ENCODE measurements at regions of chr7 and their contacts with region 1.

Region 1: GRCh38 chr7:98400542-98401340 is at the start of gene BAIAP2L1:
- DNase-seq: peak; percentile 86 to 100
- H3K4me3 ChIP-seq: peak within 1 kb of the TSS; percentile 75 to 84 (median 79)
- H3K27ac ChIP-seq: peak within 1 kb of the TSS; percentile 89
- H3K4me1 ChIP-seq: peaks cover 1 to 9% (median 6%) of the 10 kb centered on the region in 4 experiments; a peak in 6 of 7 replicates
- H3K27me3 ChIP-seq: no peaks in the 10 kb centered on the region
- CTCF ChIP-seq: peak in 2 of 3 experiments; percentile 84 to 90
- EP300 ChIP-seq: no peak
- POLR2A ChIP-seq: peak; percentile 52 to 83
- RAD21 ChIP-seq: peak; percentile 65 to 75; a peak in 2 of 4 replicates
- total RNA-seq, gene BAIAP2L1: 42.0 and 42.9 TPM in 2 replicates

Region 2: DNA sequence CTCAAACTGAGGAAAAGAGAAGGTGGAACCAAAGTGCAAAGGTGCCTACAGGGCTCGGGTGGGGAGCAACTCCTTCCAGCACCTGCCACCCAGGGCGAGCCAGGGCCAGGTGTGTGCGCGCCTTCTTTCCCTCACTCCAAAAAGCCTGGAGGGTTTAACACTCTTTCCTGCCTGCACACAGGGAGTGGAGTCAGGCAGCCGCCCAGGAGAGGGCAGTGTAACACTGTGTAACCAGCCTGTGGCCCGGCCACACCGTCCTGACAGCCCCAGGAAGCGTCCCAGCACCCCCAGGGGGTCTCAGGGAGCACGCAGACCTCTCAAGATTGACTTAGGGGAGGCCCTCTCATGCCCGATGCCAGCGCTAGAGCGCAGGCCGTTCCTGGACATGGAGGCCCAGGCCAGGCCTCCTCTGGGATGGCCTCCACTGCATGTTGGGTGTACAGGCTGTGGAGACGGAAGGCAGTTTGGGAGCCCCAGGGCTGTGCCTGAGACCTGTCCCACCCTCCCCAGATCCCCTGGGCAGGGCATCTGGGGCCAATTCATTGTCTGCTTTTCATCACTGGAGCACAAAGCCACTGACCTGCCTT is 105.9 kb before region 1 on chr7:
- CTCF ChIA-PET with region 1: interaction called, 57 read pairs
- POLR2A ChIA-PET with region 1: interaction called, 7 read pairs
- DNase-seq: peak; percentile 70 to 91
- H3K4me3 ChIP-seq: no peak overlapping the region
- H3K27ac ChIP-seq: no peak overlapping the region
- H3K4me1 ChIP-seq: peaks cover 0 to 10% (median 3%) of the 10 kb centered on the region in 4 experiments; a peak in 5 of 7 replicates
- H3K27me3 ChIP-seq: no peaks in the 10 kb centered on the region
- CTCF ChIP-seq: peak; percentile 85 to 91 (median 91)
- EP300 ChIP-seq: no peak
- POLR2A ChIP-seq: 0 out of 3 replicates have a peak, but pooled peaks of 1 of the 2 experiments have one; percentile 34
- RAD21 ChIP-seq: peak; percentile 92 to 95

Region 3: DNA sequence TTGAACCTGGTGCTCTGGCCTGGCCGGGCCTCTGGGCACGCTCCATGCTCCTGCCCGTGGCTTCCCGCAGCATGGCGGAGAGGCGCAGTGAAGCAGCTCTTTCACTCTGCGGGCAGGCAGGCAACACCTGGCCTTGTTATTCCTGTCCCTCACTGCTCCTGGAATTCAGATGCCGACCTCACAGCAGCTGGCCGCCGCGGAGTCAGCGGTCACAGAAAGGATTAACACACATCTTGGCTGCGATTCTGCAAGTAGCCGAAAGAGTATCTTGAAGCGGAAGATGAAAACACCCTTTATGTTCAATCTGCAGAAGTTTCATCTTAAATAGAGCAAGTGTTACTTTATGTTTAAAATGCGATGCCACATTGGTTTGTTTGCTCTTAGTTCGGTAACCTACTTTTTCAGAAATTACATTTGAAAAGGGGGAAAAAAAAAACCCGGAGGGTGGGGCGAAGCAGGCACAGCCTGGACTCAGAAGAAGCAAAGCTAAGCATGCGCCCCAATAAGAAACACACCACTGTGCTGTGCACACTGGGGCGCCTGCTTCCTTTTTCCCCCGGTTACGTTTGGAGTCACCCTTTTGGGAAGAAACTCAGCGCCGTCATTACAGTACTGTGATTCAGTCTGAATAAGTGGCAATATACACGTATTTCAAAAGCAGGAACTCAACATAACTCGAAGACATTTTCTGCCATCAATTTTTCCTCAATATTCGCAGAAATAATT is 77.0 kb before region 1 on chr7:
- CTCF ChIA-PET with region 1: interaction called, 48 read pairs
- POLR2A ChIA-PET with region 1: interaction called, 16 read pairs
- DNase-seq: peak; percentile 33 to 71
- H3K4me3 ChIP-seq: peak overlapping the region in 2 of 4 experiments; percentile 9 to 49; a peak in 3 of 8 replicates
- H3K27ac ChIP-seq: peak overlapping the region; percentile 57; the same call in 1 of the 2 replicates
- H3K4me1 ChIP-seq: peaks cover 4 to 17% (median 10%) of the 10 kb centered on the region in 4 experiments
- H3K27me3 ChIP-seq: no peaks in the 10 kb centered on the region
- CTCF ChIP-seq: no peak; a peak in 1 of 4 replicates
- EP300 ChIP-seq: peak in 1 of 2 experiments; percentile 71; a peak in 1 of 3 replicates
- POLR2A ChIP-seq: peak in 1 of 2 experiments; percentile 67; a peak in 2 of 3 replicates
- RAD21 ChIP-seq: peak; percentile 18 to 21; a peak in 1 of 4 replicates

Region 4: DNA sequence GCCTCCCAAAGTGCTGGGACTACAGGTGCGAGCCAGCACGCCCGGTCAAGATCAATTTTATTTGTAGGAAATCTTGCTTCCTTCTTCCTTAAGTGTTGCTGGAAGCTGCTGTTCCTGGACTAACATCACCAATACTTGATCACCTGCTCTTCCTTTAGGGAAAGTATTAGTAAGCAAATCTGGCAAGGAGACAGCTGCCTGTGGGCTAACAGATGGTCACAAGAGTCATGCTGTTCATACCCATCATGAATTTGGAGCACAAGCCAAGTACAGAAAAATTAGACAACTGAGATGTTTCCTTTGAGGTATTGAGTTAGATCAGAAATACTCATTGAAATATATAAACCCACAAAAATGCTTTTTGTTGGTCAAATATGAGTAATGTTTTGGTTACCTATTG is 27.7 kb before region 1 on chr7:
- CTCF ChIA-PET with region 1: interaction called, 6 read pairs
- POLR2A ChIA-PET with region 1: interaction called, 11 read pairs
- DNase-seq: no peak
- H3K4me3 ChIP-seq: no peak overlapping the region
- H3K27ac ChIP-seq: no peak overlapping the region
- H3K4me1 ChIP-seq: peaks cover 0 to 2% (median 0%) of the 10 kb centered on the region in 4 experiments; a peak in 2 of 7 replicates
- H3K27me3 ChIP-seq: no peaks in the 10 kb centered on the region
- CTCF ChIP-seq: no peak
- EP300 ChIP-seq: no peak
- POLR2A ChIP-seq: no peak
- RAD21 ChIP-seq: no peak

Measured in H1 (cell line).